Activated naive CD4-positive, alpha-beta T cell treated with anti-CD3 and anti-CD28 coated beads for 36 hours (primary cell): ENCODE measurements at regions of chr11 and their contacts with region 1.

Region 1: GRCh38 chr11:43311791-43312607 is at the start of gene API5:
- DNase-seq: peak; percentile 96
- H3K4me3 Mint-ChIP-seq: peak within 1 kb of the TSS; percentile 90
- H3K27ac Mint-ChIP-seq: peak within 1 kb of the TSS; percentile 88
- H3K4me1 Mint-ChIP-seq: peaks cover 37% of the 10 kb centered on the region
- H3K27me3 Mint-ChIP-seq: no peaks in the 10 kb centered on the region
- total RNA-seq, gene API5: 139 to 147 TPM

Region 2: DNA sequence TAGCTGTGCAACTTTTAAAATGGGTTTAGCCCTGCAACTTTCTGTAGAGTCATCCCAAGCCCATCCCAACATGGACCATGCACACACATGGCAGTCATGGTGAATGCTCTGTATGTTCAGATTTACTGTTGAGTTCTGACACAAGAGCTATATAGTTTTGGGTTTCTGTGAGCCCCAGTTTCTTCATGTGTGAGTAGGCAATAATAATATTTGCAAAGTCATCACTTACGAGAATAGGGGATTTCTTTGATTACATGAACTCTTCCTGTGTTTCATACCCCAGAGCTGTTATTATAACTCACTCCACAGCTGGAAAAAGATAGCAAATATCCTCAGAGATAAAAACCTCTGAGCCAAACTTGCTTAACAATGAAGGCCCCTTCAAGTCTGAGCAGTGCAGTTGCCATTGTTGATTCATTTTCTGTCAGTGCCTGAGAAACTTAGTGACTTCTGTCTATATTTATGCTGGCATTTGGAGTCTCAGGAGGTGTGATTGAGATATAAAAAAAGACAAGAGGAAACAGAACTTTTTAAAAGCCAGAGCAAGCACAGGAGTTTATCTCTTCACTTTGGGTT is 768.1 kb before region 1 on chr11:
- CTCF ChIA-PET with region 1: no interaction called
- intact Hi-C with region 1: no loop called
- DNase-seq: no peak
- H3K4me3 Mint-ChIP-seq: no peak overlapping the region
- H3K27ac Mint-ChIP-seq: no peak overlapping the region
- H3K4me1 Mint-ChIP-seq: no peaks in the 10 kb centered on the region
- H3K27me3 Mint-ChIP-seq: no peaks in the 10 kb centered on the region

Region 3: DNA sequence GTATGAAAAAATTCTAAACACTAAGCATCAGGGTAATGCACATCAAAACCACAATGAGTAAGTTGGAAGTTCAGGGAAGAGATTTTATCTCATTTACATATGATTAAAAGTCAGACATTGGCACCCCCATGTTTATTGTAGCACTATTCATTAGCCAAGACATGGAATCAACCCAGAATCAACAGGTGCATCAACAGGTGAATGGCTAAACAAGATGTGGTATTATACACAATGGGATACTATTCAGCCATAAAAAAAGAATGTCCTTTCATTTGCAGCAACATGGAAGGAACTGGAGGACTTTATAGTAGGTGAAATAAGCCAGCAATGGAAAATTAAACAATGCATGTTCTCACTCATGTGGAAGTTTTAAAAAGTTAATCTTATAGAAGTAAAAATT is 29.2 kb after region 1 on chr11:
- CTCF ChIA-PET with region 1: no interaction called
- intact Hi-C with region 1: loop called (anchors 2 kb)
- DNase-seq: no peak
- H3K4me3 Mint-ChIP-seq: no peak overlapping the region
- H3K27ac Mint-ChIP-seq: no peak overlapping the region
- H3K4me1 Mint-ChIP-seq: no peaks in the 10 kb centered on the region
- H3K27me3 Mint-ChIP-seq: no peaks in the 10 kb centered on the region

Region 4: DNA sequence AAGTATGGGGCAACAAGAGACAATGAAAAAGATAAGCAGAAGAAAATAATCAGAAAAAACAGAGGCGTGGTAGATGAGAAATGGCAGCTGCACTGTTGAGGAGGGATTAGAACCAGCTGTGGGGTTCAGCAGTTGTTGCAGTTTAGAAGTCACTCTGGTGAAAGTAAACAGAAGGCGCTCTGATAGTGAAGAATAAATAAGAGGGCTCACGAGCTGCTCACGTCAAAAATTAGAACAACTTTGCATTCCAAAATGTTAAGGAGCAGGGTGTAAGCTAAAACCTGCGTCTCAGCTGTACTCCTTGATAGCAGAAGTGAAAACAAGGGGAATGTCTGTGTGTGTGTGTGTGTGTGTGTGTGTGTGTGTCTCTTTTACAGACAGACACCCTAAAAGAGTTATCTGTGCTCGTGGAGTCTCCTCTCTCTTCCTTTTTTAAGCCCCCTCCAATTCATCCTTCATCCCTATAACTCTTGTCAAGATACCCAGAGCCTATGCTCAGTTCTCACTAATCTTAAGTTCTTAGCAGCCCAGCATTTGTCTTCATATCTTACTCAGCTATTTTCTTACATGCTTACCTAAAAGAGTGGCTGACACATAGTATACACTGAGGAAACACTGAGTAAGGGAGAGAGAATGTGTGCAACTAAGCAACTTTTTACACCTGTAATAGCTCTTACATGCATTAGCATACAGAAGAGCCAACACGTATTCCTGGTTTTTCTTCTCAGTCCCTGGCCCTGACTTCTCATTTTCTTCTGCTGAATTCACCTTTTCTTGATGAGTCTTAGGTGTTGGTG is 55.6 kb after region 1 on chr11:
- CTCF ChIA-PET with region 1: no interaction called
- intact Hi-C with region 1: no loop called
- DNase-seq: no peak
- H3K4me3 Mint-ChIP-seq: no peak overlapping the region
- H3K27ac Mint-ChIP-seq: no peak overlapping the region
- H3K4me1 Mint-ChIP-seq: peaks cover 54% of the 10 kb centered on the region
- H3K27me3 Mint-ChIP-seq: no peaks in the 10 kb centered on the region

Region 5: GRCh38 chr11:43419460-43419859 is 107.5 kb after region 1 on chr11:
- CTCF ChIA-PET with region 1: no interaction called
- intact Hi-C with region 1: loop called (anchors 1 kb)
- DNase-seq: peak; percentile 57
- H3K4me3 Mint-ChIP-seq: no peak overlapping the region
- H3K27ac Mint-ChIP-seq: no peak overlapping the region
- H3K4me1 Mint-ChIP-seq: no peaks in the 10 kb centered on the region
- H3K27me3 Mint-ChIP-seq: no peaks in the 10 kb centered on the region

Region 6: GRCh38 chr11:43579171-43579918 is 267.3 kb after region 1 on chr11:
- CTCF ChIA-PET with region 1: no interaction called
- intact Hi-C with region 1: loop called (anchors 1 kb)
- DNase-seq: peak; percentile 58
- H3K4me3 Mint-ChIP-seq: peak overlapping the region; percentile 72
- H3K27ac Mint-ChIP-seq: no peak overlapping the region
- H3K4me1 Mint-ChIP-seq: peaks cover 54% of the 10 kb centered on the region
- H3K27me3 Mint-ChIP-seq: peaks cover 93% of the 10 kb centered on the region

Region 7: GRCh38 chr11:43830928-43831440 is 519.0 kb after region 1 on chr11:
- CTCF ChIA-PET with region 1: no interaction called
- intact Hi-C with region 1: loop called (anchors 5 kb)
- DNase-seq: peak; percentile 80
- H3K4me3 Mint-ChIP-seq: no peak overlapping the region
- H3K27ac Mint-ChIP-seq: peak overlapping the region; percentile 86
- H3K4me1 Mint-ChIP-seq: peaks cover 15% of the 10 kb centered on the region
- H3K27me3 Mint-ChIP-seq: no peaks in the 10 kb centered on the region

Region 8: DNA sequence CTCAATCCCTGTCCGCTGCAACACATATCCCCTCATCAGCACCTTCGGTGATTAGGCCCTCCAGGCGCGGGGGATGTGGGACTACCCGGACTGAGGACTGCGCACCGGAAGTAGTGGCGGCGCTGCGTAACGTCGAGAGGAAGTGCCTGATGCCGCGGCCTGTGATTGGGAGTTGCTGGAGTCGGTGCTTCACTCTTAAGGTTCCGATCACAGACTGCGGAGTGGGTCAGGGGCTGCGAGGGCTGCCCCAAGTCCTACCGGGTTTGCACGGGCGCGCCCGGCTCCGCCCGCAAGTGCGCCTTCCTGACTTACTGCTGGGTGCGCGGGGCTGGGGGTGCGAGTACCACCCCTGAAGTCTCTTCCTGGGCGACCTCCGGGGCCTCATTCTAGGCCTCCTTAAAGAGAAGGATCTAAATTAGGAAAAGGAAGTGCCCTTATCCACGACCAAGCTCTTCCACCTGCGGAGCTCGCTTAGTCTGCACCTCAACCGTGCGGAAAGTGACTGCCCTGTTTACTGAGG is 568.7 kb after region 1 on chr11 and contains the start of gene ALKBH3:
- CTCF ChIA-PET with region 1: no interaction called
- intact Hi-C with region 1: loop called (anchors 2 kb)
- DNase-seq: peak; percentile 94
- H3K4me3 Mint-ChIP-seq: peak within 1 kb of the TSS; percentile 81
- H3K27ac Mint-ChIP-seq: peak within 1 kb of the TSS; percentile 68
- H3K4me1 Mint-ChIP-seq: peaks cover 32% of the 10 kb centered on the region
- H3K27me3 Mint-ChIP-seq: no peaks in the 10 kb centered on the region
- total RNA-seq, gene ALKBH3: 33.5 to 36.6 TPM